ENCODE measurements at regions of chr1 and their contacts with region 1.

Region 1: DNA sequence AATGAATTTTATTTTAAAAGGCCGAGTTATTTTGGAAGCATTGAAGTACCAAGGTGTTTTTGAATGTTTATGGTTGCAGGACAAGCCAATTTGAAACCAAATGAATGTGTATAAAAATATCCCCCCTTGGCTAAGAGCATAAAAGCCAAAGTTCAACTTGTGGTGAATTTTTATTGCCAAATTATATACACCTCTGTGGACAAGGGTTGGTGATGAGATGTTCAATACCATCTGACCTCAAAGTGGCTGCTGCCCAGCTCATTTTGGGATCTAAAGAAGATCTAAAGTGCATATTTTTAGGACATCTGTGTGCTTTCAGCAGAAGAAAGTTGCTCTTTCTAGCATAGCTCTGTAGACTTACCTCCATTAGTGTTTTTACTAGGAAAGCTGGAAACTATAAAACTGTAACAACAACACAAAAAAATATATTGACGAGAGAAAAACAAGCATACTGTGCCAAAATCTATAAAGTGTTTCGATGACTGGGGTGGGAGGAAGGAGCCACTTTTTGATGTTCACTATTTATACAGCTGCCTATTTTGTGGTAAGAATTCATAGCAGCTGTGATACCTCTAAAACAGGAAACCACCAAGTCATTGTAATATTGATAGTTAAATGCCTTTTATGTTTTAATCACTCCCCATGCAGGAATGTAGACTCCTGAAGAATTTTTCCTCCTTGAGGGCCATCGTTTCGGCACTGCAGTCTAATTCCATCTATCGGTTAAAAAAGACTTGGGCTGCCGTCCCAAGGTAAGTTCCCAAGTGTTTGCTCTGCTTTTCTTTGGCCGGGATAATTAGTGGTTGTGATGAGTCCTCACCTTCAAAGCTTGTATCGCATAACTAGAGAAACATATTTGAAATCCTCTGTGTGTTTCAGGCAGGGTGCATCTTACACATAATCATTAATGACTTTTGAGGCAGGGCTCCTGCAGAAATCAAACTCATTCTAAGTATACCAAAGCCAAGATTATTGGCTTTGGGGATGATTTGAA is 83.2 kb downstream of the RGL1 start:
- DNase-seq: peak in 6 of 9 donors; percentile 22 to 46 (median 44)
- ATAC-seq: peak; percentile 77
- H3K4me3 ChIP-seq: peak overlapping the region; percentile 43
- H3K4me3 Mint-ChIP-seq: peak overlapping the region; percentile 65 to 84 (median 74)
- H3K27ac ChIP-seq: peak overlapping the region; percentile 36
- H3K27ac Mint-ChIP-seq: peak overlapping the region; percentile 43 to 83 (median 74)
- H3K4me1 ChIP-seq: peaks cover 10 to 31% of the 10 kb centered on the region in 2 donors
- H3K4me1 Mint-ChIP-seq: peaks cover 29 to 54% (median 47%) of the 10 kb centered on the region in 7 donors
- H3K27me3 ChIP-seq: no peaks in the 10 kb centered on the region
- H3K27me3 Mint-ChIP-seq: no peaks in the 10 kb centered on the region

Region 2: DNA sequence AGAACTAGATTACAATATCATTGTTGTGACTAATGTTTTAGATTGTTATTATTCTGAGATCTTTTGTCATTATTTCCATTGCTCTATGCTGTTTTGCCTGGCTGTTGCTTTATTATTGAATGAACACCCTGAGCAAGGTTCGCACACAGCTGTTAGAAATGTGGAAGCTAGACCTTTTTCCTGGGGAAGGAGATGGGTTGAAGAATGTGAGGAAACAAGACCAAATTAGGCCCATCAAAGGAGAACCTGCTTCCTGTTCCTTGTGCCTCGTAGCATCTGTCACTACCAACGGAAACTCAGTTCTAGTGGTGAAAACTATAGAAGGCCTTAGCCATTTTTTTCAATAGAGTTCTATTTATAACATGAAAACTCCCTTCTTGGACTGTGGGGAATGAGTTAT is 14.5 kb before region 1 on chr1:
- CTCF ChIA-PET with region 1: interaction called, 3 read pairs
- POLR2A ChIA-PET with region 1: no interaction called
- intact Hi-C with region 1: loop called in 1 of 2 experiments (anchors 2 kb)
- DNase-seq: peak in 6 of 9 donors; percentile 12 to 45 (median 35)
- ATAC-seq: peak; percentile 45
- H3K4me3 ChIP-seq: no peak overlapping the region
- H3K4me3 Mint-ChIP-seq: peak overlapping the region in 2 of 10 donors; percentile 17 to 52
- H3K27ac ChIP-seq: peak overlapping the region; percentile 4
- H3K27ac Mint-ChIP-seq: peak overlapping the region; percentile 27 to 87 (median 73)
- H3K4me1 ChIP-seq: peaks cover 0 to 12% of the 10 kb centered on the region in 2 donors
- H3K4me1 Mint-ChIP-seq: peaks cover 8 to 33% (median 27%) of the 10 kb centered on the region in 7 donors
- H3K27me3 ChIP-seq: no peaks in the 10 kb centered on the region
- H3K27me3 Mint-ChIP-seq: peaks cover 0 to 4% (median 0%) of the 10 kb centered on the region in 5 donors

Region 3: DNA sequence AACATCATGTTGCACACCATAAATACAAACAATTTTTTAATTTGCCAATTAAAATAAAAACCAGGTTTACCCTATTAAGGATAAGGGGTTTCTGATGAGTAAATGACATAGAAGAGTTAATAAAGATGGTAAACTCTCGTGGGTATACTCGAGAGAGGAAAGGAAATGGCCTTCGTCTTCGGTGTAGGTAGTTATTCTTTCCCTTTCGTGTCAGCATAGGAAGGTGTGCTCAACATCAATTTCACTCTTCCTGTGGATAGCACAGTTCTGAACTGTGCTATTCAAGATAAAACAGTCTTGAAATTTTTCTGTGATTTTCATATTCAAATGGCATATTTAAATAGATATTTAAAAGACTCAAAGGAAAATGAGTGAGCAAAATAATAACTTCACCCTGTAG is 15.0 kb after region 1 on chr1:
- CTCF ChIA-PET with region 1: interaction called, 4 read pairs
- POLR2A ChIA-PET with region 1: no interaction called
- intact Hi-C with region 1: loop called in 1 of 2 experiments (anchors 1 kb)
- DNase-seq: no peak
- ATAC-seq: no peak
- H3K4me3 ChIP-seq: no peak overlapping the region
- H3K4me3 Mint-ChIP-seq: no peak overlapping the region
- H3K27ac ChIP-seq: no peak overlapping the region
- H3K27ac Mint-ChIP-seq: no peak overlapping the region
- H3K4me1 ChIP-seq: no peaks in the 10 kb centered on the region
- H3K4me1 Mint-ChIP-seq: peaks cover 0 to 7% (median 2%) of the 10 kb centered on the region in 7 donors
- H3K27me3 ChIP-seq: no peaks in the 10 kb centered on the region
- H3K27me3 Mint-ChIP-seq: no peaks in the 10 kb centered on the region

Measured in naive thymus-derived CD4-positive, alpha-beta T cell (primary cell).